ENCODE measurements at regions of chr20 and their contacts with region 1.

Region 1: DNA sequence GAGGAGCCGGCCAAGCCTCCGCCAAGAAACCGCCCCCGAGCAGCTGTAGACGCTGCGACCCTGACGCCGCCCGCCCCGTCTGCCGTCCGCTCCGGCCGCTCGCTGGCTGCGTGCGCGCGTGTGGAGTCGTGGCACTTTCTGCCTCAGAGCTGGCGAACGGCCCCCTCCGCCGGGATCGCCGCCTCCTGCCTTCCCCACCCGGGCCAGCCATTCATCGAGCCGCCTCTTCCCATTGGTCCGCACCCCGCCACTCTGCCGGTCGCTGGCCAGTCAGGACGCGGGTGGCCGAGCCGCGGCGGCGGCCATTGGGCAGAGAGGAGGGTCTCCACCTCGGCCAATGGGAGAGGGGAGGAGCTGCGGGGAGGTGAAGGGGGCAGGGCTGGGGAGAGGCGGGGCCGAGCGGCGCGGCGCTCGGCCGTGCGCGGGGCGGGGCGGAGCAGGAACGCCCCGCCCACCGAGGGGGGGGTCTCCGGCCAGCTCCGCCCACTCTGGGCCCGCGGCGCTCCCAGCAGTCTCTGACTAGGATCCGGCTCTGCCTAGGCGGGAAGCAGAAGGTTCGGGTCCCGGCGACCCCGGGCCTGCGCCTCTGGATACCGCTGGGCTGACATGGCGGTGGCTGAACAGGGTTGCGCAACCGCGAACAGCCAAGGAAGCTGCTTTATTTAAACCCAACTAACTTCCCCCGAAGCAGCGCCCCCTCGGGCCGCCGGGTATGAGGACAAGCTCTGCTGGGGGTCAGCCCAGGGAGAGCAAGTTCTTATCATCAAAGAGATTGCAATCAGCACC is at the start of gene RRBP1:
- DNase-seq: peak; percentile 97
- H3K4me3 Mint-ChIP-seq: peak within 1 kb of the TSS; percentile 81
- H3K27ac Mint-ChIP-seq: peak within 1 kb of the TSS; percentile 61
- H3K4me1 Mint-ChIP-seq: peaks cover 11% of the 10 kb centered on the region
- H3K27me3 Mint-ChIP-seq: peaks cover 41% of the 10 kb centered on the region
- CTCF ChIP-seq: peak; percentile 65
- total RNA-seq, gene RRBP1: 203 and 244 TPM in 2 replicates

Region 2: GRCh38 chr20:17542993-17543412 is 139.3 kb before region 1 on chr20:
- CTCF ChIA-PET with region 1: interaction called, 10 read pairs
- POLR2A ChIA-PET with region 1: interaction called, 4 read pairs
- intact Hi-C with region 1: no loop called
- DNase-seq: peak; percentile 71
- H3K4me3 Mint-ChIP-seq: no peak overlapping the region
- H3K27ac Mint-ChIP-seq: no peak overlapping the region
- H3K4me1 Mint-ChIP-seq: peaks cover 27% of the 10 kb centered on the region
- H3K27me3 Mint-ChIP-seq: no peaks in the 10 kb centered on the region
- CTCF ChIP-seq: no peak

Region 3: DNA sequence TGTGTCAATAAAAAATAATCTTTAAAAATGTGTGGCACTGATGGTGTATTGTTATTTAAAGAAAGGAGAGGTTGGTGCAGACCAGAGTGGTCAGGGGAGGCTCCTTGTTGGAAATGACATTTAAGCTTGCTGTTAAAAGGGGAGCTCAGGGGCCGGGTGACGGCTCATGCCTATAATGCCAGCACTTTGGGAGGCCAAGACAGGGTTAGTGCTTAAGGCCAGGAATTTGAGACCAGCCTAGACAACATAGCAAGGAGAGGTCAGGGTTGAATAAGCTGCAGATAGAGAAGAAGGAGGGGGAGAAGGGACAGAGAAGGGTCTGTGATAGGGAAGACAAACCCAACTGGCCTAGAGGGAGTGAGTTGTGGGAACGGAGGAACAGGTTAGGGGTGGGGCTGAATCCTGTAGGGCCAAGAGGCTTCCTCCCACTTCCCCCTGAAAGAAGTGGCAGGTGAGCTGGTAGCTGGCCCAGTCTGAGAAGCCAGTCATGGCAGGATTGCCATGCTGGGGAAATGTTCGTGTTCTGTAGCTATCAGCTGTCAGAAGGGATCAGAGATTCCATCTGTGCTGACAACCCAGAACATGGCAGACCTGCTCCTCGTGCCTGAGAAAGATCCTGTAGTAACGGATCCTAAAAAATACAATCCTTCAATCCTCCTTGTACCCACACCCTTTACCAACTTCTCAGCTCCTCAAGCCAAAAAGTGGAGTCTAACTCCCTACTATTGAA is 60.3 kb after region 1 on chr20:
- CTCF ChIA-PET with region 1: interaction called, 10 read pairs
- POLR2A ChIA-PET with region 1: interaction called, 5 read pairs
- intact Hi-C with region 1: no loop called
- DNase-seq: no peak
- H3K4me3 Mint-ChIP-seq: no peak overlapping the region
- H3K27ac Mint-ChIP-seq: no peak overlapping the region
- H3K4me1 Mint-ChIP-seq: peaks cover 7% of the 10 kb centered on the region
- H3K27me3 Mint-ChIP-seq: no peaks in the 10 kb centered on the region
- CTCF ChIP-seq: no peak

Region 4: DNA sequence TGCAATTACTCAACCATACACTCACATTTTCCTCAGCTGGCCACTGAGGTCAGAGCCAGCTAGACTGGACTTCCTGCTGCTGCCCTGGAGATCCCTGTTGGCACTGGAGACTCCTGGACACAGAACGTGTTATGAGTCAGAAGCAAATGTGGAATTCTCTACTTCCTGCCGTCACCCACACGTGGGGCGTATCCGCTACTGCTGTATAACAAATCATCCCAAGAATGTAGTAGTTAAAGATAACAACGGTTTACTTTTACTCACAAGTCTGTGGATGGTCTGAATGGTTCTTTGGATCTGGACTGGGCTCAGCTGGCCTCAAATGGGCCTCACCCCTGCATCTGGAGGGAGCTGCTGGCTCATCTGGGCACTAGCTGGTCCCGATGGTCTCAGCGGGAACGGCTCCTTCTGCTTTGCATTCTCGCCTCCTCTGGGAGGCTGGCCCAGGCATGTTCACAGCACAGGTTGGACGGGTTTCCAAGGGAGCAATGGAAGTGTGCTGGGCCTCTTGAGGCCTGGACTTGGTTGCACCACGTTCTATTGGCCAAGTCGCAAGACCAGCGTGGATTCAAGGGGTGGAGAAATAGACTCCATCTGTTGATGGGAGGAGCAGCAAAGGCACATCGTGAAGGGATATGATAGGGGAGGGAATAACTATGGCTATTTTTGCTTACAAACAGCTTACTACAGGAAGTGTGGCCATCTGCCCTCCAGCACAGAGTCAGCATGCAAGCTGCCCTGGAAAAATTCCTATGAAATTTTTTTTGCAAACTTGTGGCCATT is 167.8 kb after region 1 on chr20:
- CTCF ChIA-PET with region 1: interaction called, 10 read pairs
- POLR2A ChIA-PET with region 1: interaction called, 10 read pairs
- intact Hi-C with region 1: no loop called
- DNase-seq: peak; percentile 95
- H3K4me3 Mint-ChIP-seq: peak overlapping the region; percentile 56
- H3K27ac Mint-ChIP-seq: peak overlapping the region; percentile 92
- H3K4me1 Mint-ChIP-seq: peaks cover 50% of the 10 kb centered on the region
- H3K27me3 Mint-ChIP-seq: no peaks in the 10 kb centered on the region
- CTCF ChIP-seq: no peak

Region 5: GRCh38 chr20:17958373-17959256 is 276.3 kb after region 1 on chr20:
- CTCF ChIA-PET with region 1: interaction called, 3 read pairs
- POLR2A ChIA-PET with region 1: interaction called, 14 read pairs
- intact Hi-C with region 1: no loop called
- DNase-seq: no peak
- H3K4me3 Mint-ChIP-seq: no peak overlapping the region
- H3K27ac Mint-ChIP-seq: peak overlapping the region; percentile 82
- H3K4me1 Mint-ChIP-seq: peaks cover 33% of the 10 kb centered on the region
- H3K27me3 Mint-ChIP-seq: no peaks in the 10 kb centered on the region
- CTCF ChIP-seq: no peak

Measured in MCF 10A (cell line).